Left ventricle myocardium superior (tissue), 1 donor: ENCODE measurements at regions of chr3 and their contacts with region 1.

Region 1: GRCh38 chr3:134299185-134299887 is 48.7 kb upstream of the RYK start:
- DNase-seq: no peak
- ATAC-seq: peak; percentile 79

Region 2: GRCh38 chr3:134212906-134213665 is 86.2 kb before region 1 on chr3:
- intact Hi-C with region 1: loop called (anchors 5 kb)
- DNase-seq: peak; percentile 83
- ATAC-seq: peak; percentile 90

Region 3: DNA sequence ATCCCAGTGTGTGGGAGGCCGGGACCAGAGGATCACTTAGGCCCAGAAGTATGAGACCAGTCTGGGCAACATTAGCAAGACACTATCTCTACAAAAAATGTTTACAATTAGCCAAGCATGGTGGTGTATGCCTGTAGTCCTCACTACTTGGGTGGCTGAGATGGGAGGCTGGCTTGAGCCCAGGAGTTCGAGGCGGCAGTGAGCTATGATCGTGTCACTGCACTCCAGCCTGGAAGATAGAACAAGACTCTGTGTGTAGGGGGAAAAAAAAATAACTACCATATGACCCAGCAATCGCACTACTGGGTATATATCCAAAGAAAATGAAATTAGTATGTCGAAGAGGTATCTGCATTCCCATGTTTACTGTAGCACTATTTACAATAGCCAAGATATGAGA is 71.3 kb before region 1 on chr3:
- intact Hi-C with region 1: no loop called
- DNase-seq: no peak
- ATAC-seq: peak; percentile 35

Region 4: GRCh38 chr3:134250717-134251220 is 48.6 kb before region 1 on chr3 and contains the start of gene RYK:
- intact Hi-C with region 1: no loop called
- DNase-seq: peak; percentile 91
- ATAC-seq: peak; percentile 95
- total RNA-seq, gene RYK: 37.5 TPM